ENCODE measurements at regions of chr6 and their contacts with region 1.

Region 1: DNA sequence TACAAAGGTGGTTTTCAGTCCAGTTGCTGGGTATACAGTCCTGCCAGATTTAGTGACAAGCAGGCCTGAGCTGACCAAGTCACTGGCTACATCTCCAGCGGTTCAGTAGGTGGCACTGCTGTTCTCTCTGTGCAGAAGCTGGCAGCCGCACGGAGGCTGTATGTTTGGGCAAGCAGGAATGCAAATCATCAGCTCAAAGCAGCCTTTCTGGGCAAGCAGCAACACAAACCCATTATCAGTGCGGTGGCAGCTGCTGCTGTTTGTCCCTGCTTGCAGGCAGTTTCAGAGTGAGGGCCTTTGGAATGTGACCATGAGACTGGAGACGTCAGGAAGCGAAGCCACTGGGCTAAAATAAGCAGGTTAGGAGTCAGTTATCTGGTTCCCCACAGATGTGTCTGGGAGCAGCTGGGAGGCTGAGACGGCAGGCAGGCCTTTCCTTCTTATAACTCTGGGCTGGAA is 72.5 kb downstream of the TXLNB start:
- DNase-seq: peak; percentile 78
- H3K4me3 Mint-ChIP-seq: no peak overlapping the region
- H3K27ac Mint-ChIP-seq: no peak overlapping the region
- H3K4me1 Mint-ChIP-seq: peaks cover 5% of the 10 kb centered on the region
- H3K27me3 Mint-ChIP-seq: no peaks in the 10 kb centered on the region
- CTCF ChIP-seq: peak; percentile 63

Region 2: GRCh38 chr6:138817822-138818308 is 401.4 kb before region 1 on chr6:
- CTCF ChIA-PET with region 1: interaction called, 5 read pairs
- POLR2A ChIA-PET with region 1: no interaction called
- intact Hi-C with region 1: loop called (anchors 2 kb)
- DNase-seq: no peak
- H3K4me3 Mint-ChIP-seq: no peak overlapping the region
- H3K27ac Mint-ChIP-seq: no peak overlapping the region
- H3K4me1 Mint-ChIP-seq: peaks cover 10% of the 10 kb centered on the region
- H3K27me3 Mint-ChIP-seq: no peaks in the 10 kb centered on the region
- CTCF ChIP-seq: no peak

Region 3: DNA sequence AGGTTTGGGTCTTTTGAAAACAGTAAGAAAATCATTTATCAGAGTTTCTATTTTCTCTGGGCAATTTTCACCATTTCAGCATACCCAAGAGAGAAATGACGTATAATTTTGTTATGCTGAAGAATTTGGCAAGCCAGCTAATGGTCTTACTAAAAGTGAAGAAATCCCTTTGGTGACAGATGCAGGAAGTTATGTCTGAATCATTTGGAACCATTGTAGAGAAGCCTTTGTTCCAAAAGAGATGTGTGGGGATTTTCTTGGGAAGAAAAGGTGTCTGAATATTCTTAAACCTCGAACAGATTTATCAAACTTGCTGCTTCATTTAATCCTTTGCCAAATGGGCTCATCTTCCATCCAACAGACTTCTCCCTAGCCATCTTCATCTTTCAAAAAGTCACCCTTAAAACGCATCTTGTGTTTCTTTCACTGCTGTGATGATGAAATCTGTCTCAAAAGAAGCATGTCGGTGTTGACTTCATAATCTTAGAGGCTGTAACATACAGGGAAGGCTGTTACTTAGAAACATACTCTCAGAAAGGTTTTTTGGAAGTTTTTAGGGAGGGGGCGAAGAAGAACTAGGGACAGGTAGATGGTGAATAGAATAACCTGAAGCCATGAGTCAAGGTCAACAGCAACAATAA is 115.6 kb after region 1 on chr6:
- CTCF ChIA-PET with region 1: interaction called, 10 read pairs
- POLR2A ChIA-PET with region 1: no interaction called
- intact Hi-C with region 1: no loop called
- DNase-seq: peak; percentile 88
- H3K4me3 Mint-ChIP-seq: peak overlapping the region; percentile 26
- H3K27ac Mint-ChIP-seq: peak overlapping the region; percentile 88
- H3K4me1 Mint-ChIP-seq: peaks cover 30% of the 10 kb centered on the region
- H3K27me3 Mint-ChIP-seq: no peaks in the 10 kb centered on the region
- CTCF ChIP-seq: no peak

Region 4: GRCh38 chr6:139346392-139346791 is 127.1 kb after region 1 on chr6:
- CTCF ChIA-PET with region 1: interaction called, 17 read pairs
- POLR2A ChIA-PET with region 1: no interaction called
- intact Hi-C with region 1: no loop called
- DNase-seq: no peak
- H3K4me3 Mint-ChIP-seq: no peak overlapping the region
- H3K27ac Mint-ChIP-seq: no peak overlapping the region
- H3K4me1 Mint-ChIP-seq: no peaks in the 10 kb centered on the region
- H3K27me3 Mint-ChIP-seq: no peaks in the 10 kb centered on the region
- CTCF ChIP-seq: no peak

Region 5: DNA sequence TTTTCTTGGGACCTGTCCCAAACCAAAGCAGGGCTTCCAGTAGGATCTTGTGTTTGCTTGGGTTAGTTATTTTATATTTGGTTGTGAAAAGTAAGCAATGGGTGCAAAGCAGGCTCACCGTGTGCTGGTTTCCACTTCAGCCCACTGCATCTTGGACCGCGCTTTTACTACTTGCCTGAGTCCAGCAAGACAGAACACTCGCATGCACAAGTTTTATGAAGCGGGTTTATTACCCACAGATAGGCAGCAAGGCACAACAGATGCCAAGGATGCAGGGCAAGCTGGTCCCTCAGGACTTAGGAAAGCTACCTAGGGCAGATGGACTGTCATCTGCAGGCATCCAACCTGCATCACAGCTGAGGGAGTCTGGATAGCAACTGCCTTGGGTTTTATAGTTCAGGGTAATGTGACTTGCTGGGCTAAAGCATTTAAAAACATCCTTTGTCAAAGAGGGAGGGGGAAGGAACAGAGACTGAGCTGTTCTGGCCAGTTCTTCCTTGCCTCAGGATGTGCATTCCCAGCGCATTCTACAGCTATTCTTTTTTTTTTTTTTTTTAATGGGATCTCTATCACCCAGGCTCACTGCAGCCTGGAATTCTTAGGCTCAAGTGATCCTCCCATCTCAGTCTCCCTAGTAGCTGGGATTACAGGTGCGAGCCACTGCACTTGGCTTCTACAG is 136.6 kb after region 1 on chr6:
- CTCF ChIA-PET with region 1: interaction called, 29 read pairs
- POLR2A ChIA-PET with region 1: interaction called, 3 read pairs
- intact Hi-C with region 1: no loop called
- DNase-seq: no peak
- H3K4me3 Mint-ChIP-seq: no peak overlapping the region
- H3K27ac Mint-ChIP-seq: no peak overlapping the region
- H3K4me1 Mint-ChIP-seq: no peaks in the 10 kb centered on the region
- H3K27me3 Mint-ChIP-seq: no peaks in the 10 kb centered on the region
- CTCF ChIP-seq: no peak

Region 6: DNA sequence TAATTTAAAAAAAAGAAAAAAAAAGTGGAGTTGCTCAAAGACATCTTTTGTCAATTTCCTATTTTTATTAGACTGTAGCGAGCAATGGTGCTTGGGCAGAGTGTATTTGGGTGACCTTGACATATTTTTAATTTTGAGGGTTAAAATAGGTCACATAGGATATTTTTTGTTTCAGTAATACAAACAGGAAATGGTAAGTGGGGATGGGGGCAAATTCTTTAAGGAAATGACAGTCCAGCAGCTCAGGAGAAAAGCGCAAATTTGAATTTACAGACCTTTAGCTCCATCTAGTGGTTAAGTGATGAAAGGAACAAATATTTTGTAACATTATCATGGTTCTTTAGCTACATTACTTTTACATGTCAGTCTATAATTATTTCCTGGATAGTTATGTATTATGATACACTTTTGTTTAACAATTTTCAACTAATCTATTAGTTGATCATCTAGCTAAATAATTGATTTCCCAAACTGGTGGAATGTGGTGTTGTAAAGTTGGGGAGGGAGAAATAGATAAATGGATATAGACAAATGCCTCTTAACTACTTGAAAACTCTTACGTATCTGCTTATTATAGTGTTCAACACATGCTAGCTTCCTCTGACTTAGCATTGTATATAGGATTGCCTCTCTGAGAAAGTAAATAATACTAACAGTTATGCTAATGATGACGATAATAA is 145.1 kb after region 1 on chr6:
- CTCF ChIA-PET with region 1: interaction called, 29 read pairs
- POLR2A ChIA-PET with region 1: interaction called, 7 read pairs
- intact Hi-C with region 1: loop called (anchors 1 kb)
- DNase-seq: peak; percentile 53
- H3K4me3 Mint-ChIP-seq: no peak overlapping the region
- H3K27ac Mint-ChIP-seq: no peak overlapping the region
- H3K4me1 Mint-ChIP-seq: no peaks in the 10 kb centered on the region
- H3K27me3 Mint-ChIP-seq: no peaks in the 10 kb centered on the region
- CTCF ChIP-seq: peak; percentile 66

Region 7: GRCh38 chr6:139927236-139927635 is 707.9 kb after region 1 on chr6:
- CTCF ChIA-PET with region 1: no interaction called
- POLR2A ChIA-PET with region 1: no interaction called
- intact Hi-C with region 1: no loop called
- DNase-seq: peak; percentile 51
- H3K4me3 Mint-ChIP-seq: no peak overlapping the region
- H3K27ac Mint-ChIP-seq: no peak overlapping the region
- H3K4me1 Mint-ChIP-seq: no peaks in the 10 kb centered on the region
- H3K27me3 Mint-ChIP-seq: no peaks in the 10 kb centered on the region
- CTCF ChIP-seq: no peak

Measured in MCF 10A (cell line).